PC-3 (cell line): ENCODE measurements at regions of chr21 and their contacts with region 1.

Region 1: DNA sequence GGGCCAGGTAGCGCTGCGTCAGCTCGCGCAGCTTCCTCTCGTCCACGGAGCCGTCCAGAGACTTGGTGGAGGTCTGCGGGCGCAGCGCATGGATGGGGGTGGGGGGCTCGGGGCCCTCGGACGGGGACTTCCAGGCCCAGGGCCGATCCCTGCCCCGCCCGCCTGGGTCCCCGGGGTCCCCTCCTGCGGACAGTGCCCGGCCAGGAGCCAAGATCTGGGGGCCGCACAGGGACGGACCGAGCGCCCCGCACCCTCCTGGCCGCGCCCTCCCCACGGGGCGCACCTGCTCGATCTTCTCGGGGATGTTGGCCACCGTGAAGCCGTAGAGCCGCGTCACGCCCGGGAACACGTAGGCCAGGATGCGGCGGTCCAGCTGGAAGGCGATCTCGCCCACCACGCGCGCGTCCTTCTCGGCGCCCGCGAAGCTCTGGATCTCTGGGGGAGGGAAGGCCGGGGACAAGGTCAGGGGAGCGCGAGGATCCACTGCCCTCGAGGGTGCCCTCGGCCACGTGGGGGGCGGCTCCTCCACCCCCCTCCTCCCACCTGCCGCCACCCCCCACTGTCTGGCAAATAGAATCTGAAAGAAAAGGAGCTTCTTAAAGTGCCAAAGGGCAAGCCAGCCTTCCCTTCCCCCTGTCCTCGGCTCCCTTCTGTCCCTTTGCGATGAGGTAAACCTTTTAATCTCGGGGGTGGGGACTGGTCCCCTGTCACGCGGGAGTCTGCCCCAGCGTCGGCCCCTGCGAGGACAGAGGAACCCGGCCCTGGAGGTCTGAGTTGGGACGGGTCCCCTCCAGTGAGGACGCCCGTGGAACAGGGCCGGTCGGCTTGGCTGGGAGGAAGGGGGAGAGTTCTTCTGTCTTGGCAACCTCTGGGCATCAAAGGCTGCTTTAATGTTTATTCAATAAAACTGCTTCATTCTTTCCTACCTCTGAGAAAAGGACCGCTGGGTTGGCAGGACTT is 6.5 kb upstream of the FTCD start:
- DNase-seq: no peak
- ATAC-seq: no peak
- H3K4me3 ChIP-seq: no peak overlapping the region
- H3K27ac ChIP-seq: no peak overlapping the region
- H3K4me1 ChIP-seq: no peaks in the 10 kb centered on the region
- H3K27me3 ChIP-seq: no peaks in the 10 kb centered on the region
- CTCF ChIP-seq: no peak

Region 2: GRCh38 chr21:46184625-46185555 is 23.0 kb after region 1 on chr21:
- CTCF ChIA-PET with region 1: no interaction called
- POLR2A ChIA-PET with region 1: no interaction called
- intact Hi-C with region 1: loop called (anchors 1 kb)
- DNase-seq: peak; percentile 65
- ATAC-seq: peak; percentile 75
- H3K4me3 ChIP-seq: peak overlapping the region; percentile 96
- H3K27ac ChIP-seq: peak overlapping the region; percentile 34
- H3K4me1 ChIP-seq: peaks cover 30% of the 10 kb centered on the region
- H3K27me3 ChIP-seq: no peaks in the 10 kb centered on the region
- CTCF ChIP-seq: no peak

Region 3: GRCh38 chr21:46250146-46250725 is 88.3 kb after region 1 on chr21:
- CTCF ChIA-PET with region 1: no interaction called
- POLR2A ChIA-PET with region 1: no interaction called
- intact Hi-C with region 1: no loop called
- DNase-seq: no peak
- ATAC-seq: no peak
- H3K4me3 ChIP-seq: no peak overlapping the region
- H3K27ac ChIP-seq: no peak overlapping the region
- H3K4me1 ChIP-seq: no peaks in the 10 kb centered on the region
- H3K27me3 ChIP-seq: no peaks in the 10 kb centered on the region
- CTCF ChIP-seq: no peak